ENCODE measurements at regions of chr5 and their contacts with region 1.

Region 1: DNA sequence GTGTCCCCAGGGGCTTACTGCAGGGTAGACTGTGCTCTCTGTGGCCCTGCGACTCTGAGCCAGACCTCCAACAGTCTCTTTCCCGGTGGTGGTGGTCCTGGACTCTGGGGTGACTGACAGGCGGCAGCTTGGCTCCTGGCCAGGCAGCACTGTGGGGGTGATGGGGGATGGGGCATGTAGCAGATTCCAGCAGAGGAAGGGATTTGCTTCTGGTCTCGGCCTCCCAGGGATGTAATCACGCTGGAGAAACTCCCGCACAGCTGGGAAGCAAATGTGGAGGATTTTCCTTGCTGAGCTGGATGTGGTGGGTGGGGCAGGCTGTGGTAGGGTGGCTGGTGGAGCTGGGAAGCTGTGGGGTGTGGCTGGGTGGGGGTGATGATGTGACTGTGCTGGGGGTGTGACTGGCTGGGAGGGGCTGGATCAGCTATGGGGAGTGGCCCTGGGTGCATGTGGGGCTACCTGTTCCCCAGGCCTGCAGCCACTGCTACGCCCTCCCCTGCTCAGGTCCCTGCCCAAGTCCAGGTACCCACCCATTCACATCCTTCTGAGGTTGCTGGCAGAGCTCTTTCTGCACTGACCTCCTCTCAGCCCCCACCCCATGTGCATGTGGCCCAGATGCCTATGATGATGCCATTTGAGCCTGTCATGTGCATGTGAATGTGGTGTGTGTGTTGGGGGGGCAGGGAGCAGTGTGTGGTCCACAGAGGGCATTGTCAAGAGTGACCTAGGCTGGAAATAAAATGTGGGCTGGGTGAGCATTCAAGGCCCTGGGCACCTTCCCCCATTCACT is 3.8 kb downstream of the NDST1 start:
- DNase-seq: no peak
- H3K4me3 ChIP-seq: no peak overlapping the region
- H3K27ac ChIP-seq: no peak overlapping the region
- H3K4me1 ChIP-seq: peaks cover 48% of the 10 kb centered on the region
- H3K27me3 ChIP-seq: no peaks in the 10 kb centered on the region
- CTCF ChIP-seq: no peak
- POLR2A ChIP-seq: no peak

Region 2: GRCh38 chr5:150497274-150497988 is 14.3 kb before region 1 on chr5:
- CTCF ChIA-PET with region 1: interaction called, 70 read pairs
- POLR2A ChIA-PET with region 1: interaction called, 5 read pairs
- dilution Hi-C with region 1: no loop called
- intact Hi-C with region 1: loop called (anchors 1 kb)
- DNase-seq: peak; percentile 92
- H3K4me3 ChIP-seq: no peak overlapping the region
- H3K27ac ChIP-seq: peak overlapping the region; percentile 31
- H3K4me1 ChIP-seq: peaks cover 26% of the 10 kb centered on the region
- H3K27me3 ChIP-seq: no peaks in the 10 kb centered on the region
- CTCF ChIP-seq: no peak
- POLR2A ChIP-seq: no peak

Region 3: DNA sequence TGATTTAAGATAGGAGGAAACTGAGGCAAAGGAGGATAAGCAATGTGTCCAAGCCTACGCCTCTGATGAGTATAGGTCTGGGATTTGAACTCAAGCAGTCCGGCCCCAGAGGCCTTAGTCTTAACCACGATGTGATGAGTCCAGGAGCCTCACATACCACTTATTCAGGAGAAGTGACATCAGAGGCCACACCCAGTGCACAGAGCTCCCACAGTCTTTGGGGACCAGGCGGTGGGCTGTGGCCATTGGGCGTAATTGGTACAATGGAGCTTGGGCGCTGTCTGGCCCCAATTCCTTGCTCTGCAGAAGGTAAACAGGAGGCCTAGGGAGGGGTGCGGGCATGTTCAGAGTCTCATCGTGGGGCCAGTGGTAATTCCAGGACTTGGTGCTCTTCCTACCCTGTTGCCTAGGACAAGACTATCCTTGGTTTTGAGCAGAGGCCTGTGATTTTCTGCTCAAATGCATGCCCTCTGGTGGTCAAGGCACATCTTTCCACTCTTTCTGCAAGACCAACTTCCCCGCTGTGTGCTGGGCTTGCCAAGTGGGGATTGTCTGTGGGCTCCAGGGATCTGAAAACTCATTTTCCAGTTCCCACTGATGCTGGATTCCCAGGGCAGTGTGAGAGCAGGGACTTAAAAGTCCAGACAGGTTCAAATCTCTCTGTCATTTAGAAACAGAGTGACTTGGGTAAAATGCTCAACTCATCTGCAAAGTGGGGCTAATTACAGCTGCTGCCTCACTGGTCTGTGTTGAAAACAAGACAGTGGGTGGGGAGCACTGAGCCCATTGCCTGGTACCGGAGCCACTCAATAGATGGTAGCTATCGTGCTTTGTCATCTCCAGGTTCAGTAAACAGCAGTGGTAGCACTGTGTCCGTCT is 11.9 kb after region 1 on chr5:
- CTCF ChIA-PET with region 1: interaction called, 32 read pairs
- POLR2A ChIA-PET with region 1: no interaction called
- dilution Hi-C with region 1: no loop called
- intact Hi-C with region 1: no loop called
- DNase-seq: peak; percentile 69
- H3K4me3 ChIP-seq: no peak overlapping the region
- H3K27ac ChIP-seq: no peak overlapping the region
- H3K4me1 ChIP-seq: no peaks in the 10 kb centered on the region
- H3K27me3 ChIP-seq: no peaks in the 10 kb centered on the region
- CTCF ChIP-seq: peak; percentile 67 to 80
- POLR2A ChIP-seq: no peak